ENCODE measurements at regions of chr15 and their contacts with region 1.

Region 1: DNA sequence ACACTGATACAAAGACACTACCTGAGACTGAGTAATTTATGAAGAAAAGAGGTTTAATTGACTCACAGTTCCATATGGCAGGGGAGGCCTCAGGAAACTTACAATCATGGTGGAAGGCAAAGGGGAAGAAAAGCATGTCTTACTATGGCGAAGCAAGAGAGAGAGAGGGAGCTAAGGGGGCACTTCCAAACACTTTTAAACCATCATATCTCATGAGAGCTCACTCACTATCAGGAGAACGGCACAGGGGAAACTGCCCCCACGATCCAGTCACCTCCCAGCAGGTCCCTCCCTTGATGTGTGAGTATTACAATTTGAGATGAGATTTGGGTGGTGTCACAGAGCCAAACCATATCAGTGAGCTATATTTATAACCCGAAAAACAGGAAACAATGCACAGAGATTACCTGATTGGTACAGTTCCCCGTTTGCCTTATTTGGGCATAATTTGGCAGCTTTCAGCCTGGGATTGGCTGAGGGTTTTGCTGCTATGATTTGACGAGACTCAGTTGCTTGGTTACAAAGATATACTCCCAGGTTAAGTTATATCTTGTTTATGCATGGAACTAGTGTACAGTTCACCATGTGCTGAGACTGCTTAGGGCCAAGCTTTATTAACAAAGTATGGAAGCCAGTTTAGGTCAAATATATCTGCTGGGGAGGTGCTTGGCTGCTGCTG is 184.2 kb downstream of the NR2F2 start:
- DNase-seq: peak; percentile 13
- H3K4me3 Mint-ChIP-seq: no peak overlapping the region
- H3K27ac Mint-ChIP-seq: peak overlapping the region; percentile 28
- H3K4me1 Mint-ChIP-seq: peaks cover 23% of the 10 kb centered on the region
- H3K27me3 Mint-ChIP-seq: no peaks in the 10 kb centered on the region
- CTCF ChIP-seq: no peak

Region 2: GRCh38 chr15:96477227-96477626 is 37.5 kb before region 1 on chr15:
- CTCF ChIA-PET with region 1: no interaction called
- intact Hi-C with region 1: loop called (anchors 2 kb)
- DNase-seq: no peak
- H3K4me3 Mint-ChIP-seq: no peak overlapping the region
- H3K27ac Mint-ChIP-seq: no peak overlapping the region
- H3K4me1 Mint-ChIP-seq: no peaks in the 10 kb centered on the region
- H3K27me3 Mint-ChIP-seq: no peaks in the 10 kb centered on the region
- CTCF ChIP-seq: no peak

Region 3: GRCh38 chr15:96619174-96619573 is 104.4 kb after region 1 on chr15:
- CTCF ChIA-PET with region 1: no interaction called
- intact Hi-C with region 1: no loop called
- DNase-seq: no peak
- H3K4me3 Mint-ChIP-seq: no peak overlapping the region
- H3K27ac Mint-ChIP-seq: no peak overlapping the region
- H3K4me1 Mint-ChIP-seq: no peaks in the 10 kb centered on the region
- H3K27me3 Mint-ChIP-seq: no peaks in the 10 kb centered on the region
- CTCF ChIP-seq: no peak

Region 4: DNA sequence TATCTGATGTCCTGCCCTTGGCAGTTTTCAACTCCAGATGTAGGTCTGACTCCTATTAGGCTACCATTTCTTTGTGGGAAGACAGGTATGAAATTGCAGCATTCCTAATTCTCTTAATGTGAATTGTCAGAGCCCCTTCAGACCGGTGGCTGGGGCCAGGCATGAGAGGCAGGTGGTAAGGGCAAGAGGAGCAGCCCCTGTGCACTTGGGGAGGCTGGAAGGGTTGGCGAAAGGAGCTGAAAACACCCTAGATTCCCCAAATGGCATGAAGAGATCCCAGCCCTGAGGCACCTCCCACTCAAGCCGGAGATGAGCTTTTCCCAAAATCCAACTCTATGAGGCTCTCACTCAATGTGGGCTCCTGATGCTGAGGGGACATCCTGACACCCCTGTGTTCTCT is 269.0 kb after region 1 on chr15:
- CTCF ChIA-PET with region 1: no interaction called
- intact Hi-C with region 1: no loop called
- DNase-seq: no peak
- H3K4me3 Mint-ChIP-seq: no peak overlapping the region
- H3K27ac Mint-ChIP-seq: no peak overlapping the region
- H3K4me1 Mint-ChIP-seq: no peaks in the 10 kb centered on the region
- H3K27me3 Mint-ChIP-seq: peaks cover 13% of the 10 kb centered on the region
- CTCF ChIP-seq: no peak